ENCODE measurements at regions of chr3 and their contacts with region 1.

Region 1: DNA sequence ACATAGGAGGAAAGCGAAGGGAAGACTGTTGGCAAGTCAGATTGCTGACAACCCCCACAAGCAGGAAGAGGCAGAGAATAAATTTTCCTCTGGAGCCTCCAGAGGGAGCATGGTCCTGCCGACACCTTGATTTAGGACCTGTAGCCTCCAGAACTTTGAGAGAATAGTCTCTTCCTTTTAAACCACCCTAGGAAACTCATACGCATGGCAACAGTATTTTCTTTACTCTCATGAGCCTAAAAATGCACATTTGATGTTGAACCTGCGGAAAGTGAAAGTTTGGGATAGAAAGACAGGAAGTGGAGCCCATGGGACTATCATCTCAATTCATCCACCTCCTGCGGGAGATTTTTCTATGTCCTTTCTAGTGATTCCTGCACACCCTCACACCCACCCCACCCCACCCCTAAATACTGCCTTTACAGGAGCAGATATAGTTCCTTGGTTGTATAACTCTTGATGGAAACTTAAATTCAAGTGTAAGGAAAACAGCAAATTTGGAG is 116.7 kb upstream of the LPP start:
- DNase-seq: no peak
- ATAC-seq: peak; percentile 81 to 87

Region 2: DNA sequence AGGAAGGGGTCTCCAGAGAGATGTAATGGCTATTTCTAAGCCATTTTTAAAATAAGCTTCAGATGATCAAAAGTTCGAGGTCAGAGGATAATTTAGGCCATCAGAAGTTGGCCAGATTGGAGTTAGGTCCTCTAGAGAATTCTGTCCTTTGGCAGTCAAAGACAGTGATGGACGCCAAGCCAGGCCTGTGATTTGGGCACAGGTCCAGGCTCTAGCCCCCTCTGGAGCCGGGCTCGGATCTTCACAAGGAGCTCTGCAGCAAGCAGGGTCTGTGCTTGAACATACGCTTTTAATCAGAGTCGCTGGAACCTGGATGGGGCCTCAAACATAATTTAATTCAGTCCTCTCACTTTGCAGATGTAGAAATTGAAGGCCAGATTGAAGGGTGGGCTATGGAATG is 140.6 kb before region 1 on chr3:
- intact Hi-C with region 1: no loop called
- DNase-seq: no peak
- ATAC-seq: peak; percentile 43 to 89

Region 3: GRCh38 chr3:187968883-187969580 is 68.2 kb before region 1 on chr3:
- intact Hi-C with region 1: loop called in 1 of 2 experiments (anchors 5 kb)
- DNase-seq: peak; percentile 36
- ATAC-seq: peak in 1 of 2 donors; percentile 56

Region 4: DNA sequence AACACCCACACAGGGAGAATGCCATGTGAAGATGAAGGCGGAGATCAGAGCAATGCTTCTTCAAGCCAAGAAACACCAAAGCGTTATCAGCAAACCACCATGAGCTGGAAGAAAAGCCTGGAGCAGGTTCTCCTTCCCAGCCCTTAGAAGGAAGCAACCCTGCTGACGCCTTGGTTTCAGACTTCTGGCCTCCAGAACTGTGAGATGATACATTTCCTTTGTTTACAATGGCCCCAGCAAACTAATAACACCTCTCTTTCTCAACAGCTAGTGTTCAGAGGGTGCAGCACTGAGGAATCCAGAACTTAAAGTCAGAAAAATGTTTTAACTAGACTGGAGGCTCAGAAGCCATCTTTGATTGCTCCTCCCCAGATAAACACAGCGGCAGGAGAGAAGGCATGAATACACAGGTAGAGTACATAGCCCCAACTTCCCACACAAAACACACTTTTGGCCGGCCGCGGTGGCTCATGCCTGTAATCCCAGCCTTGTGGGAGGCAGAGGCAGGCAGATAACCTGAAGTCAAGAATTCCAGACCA is 15.7 kb before region 1 on chr3:
- intact Hi-C with region 1: no loop called
- DNase-seq: no peak
- ATAC-seq: peak in 1 of 2 donors; percentile 70

Measured in left cardiac atrium (tissue), 4 donors.